ENCODE measurements at regions of chr10 and their contacts with region 1.

Region 1: GRCh38 chr10:115706026-115706781 is 566.8 kb downstream of the GFRA1 start:
- DNase-seq: peak; percentile 48
- H3K4me3 ChIP-seq: no peak overlapping the region
- H3K27ac ChIP-seq: no peak overlapping the region
- H3K4me1 ChIP-seq: no peaks in the 10 kb centered on the region
- H3K27me3 ChIP-seq: peaks cover 22% of the 10 kb centered on the region
- CTCF ChIP-seq: peak; percentile 70

Region 2: GRCh38 chr10:115772606-115773005 is 66.4 kb after region 1 on chr10:
- CTCF ChIA-PET with region 1: no interaction called
- POLR2A ChIA-PET with region 1: no interaction called
- intact Hi-C with region 1: no loop called
- DNase-seq: no peak
- H3K4me3 ChIP-seq: no peak overlapping the region
- H3K27ac ChIP-seq: no peak overlapping the region
- H3K4me1 ChIP-seq: no peaks in the 10 kb centered on the region
- H3K27me3 ChIP-seq: no peaks in the 10 kb centered on the region
- CTCF ChIP-seq: no peak

Region 3: DNA sequence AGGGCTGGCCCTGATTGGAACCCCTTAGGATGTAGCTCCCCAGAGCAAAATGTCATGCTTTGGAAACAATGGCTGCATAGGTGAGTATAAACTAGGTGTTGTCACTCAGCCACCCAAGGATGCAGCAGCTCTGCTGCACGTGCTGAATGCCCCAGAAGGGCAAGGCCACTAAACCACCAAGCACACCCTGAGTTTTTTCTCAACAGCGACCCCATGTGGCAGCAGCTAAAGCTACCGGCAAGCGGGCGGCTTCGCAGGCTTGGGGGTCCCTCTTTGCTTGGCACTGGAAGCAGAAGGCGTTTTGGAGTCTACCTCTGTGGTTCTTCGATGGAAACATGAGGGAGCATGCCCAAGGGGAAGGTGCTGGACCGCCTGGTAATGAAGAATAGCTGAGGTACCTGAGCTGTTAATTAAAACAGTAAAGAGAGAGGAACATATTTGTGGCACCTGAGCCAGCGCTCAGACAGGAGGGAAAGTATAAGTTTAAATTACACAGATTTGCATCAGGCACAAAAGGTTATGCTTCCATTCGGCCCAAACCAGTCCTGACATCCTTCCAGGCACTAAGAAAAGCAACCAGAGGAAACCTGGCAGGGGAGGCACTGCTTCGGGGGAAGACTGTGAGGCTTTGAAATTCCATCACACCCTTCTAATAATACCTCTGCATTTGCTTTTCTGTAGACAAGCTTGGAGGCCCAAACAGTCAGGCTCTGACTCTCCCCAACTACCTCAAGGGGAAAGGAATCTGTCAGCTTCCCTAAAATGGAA is 414.7 kb after region 1 on chr10:
- CTCF ChIA-PET with region 1: no interaction called
- POLR2A ChIA-PET with region 1: no interaction called
- intact Hi-C with region 1: loop called (anchors 10 kb)
- DNase-seq: peak; percentile 34
- H3K4me3 ChIP-seq: no peak overlapping the region
- H3K27ac ChIP-seq: no peak overlapping the region
- H3K4me1 ChIP-seq: no peaks in the 10 kb centered on the region
- H3K27me3 ChIP-seq: peaks cover 13% of the 10 kb centered on the region
- CTCF ChIP-seq: peak; percentile 60

Region 4: GRCh38 chr10:116331815-116332214 is 625.6 kb after region 1 on chr10:
- CTCF ChIA-PET with region 1: no interaction called
- POLR2A ChIA-PET with region 1: no interaction called
- intact Hi-C with region 1: no loop called
- DNase-seq: no peak
- H3K4me3 ChIP-seq: no peak overlapping the region
- H3K27ac ChIP-seq: no peak overlapping the region
- H3K4me1 ChIP-seq: no peaks in the 10 kb centered on the region
- H3K27me3 ChIP-seq: peaks cover 4% of the 10 kb centered on the region
- CTCF ChIP-seq: no peak

Measured in A673 (cell line).